CD4-positive, alpha-beta T cell (primary cell): ENCODE measurements at regions of chr7 and their contacts with region 1.

Region 1: GRCh38 chr7:24572997-24573625 is at the start of gene PALS2:
- DNase-seq: peak; percentile 61 to 92 (median 80)
- ATAC-seq: peak; percentile 76
- H3K4me3 ChIP-seq: peak within 1 kb of the TSS; percentile 84
- H3K4me3 Mint-ChIP-seq: peak within 1 kb of the TSS; percentile 97
- H3K27ac ChIP-seq: peak within 1 kb of the TSS; percentile 35 to 49
- H3K27ac Mint-ChIP-seq: peak within 1 kb of the TSS; percentile 91
- H3K4me1 ChIP-seq: peaks cover 19% of the 10 kb centered on the region
- H3K4me1 Mint-ChIP-seq: peaks cover 43% of the 10 kb centered on the region
- H3K27me3 ChIP-seq: no peaks in the 10 kb centered on the region
- H3K27me3 Mint-ChIP-seq: no peaks in the 10 kb centered on the region
- CTCF ChIP-seq: no peak
- total RNA-seq, gene PALS2: 35.0 to 53.2 TPM

Region 2: DNA sequence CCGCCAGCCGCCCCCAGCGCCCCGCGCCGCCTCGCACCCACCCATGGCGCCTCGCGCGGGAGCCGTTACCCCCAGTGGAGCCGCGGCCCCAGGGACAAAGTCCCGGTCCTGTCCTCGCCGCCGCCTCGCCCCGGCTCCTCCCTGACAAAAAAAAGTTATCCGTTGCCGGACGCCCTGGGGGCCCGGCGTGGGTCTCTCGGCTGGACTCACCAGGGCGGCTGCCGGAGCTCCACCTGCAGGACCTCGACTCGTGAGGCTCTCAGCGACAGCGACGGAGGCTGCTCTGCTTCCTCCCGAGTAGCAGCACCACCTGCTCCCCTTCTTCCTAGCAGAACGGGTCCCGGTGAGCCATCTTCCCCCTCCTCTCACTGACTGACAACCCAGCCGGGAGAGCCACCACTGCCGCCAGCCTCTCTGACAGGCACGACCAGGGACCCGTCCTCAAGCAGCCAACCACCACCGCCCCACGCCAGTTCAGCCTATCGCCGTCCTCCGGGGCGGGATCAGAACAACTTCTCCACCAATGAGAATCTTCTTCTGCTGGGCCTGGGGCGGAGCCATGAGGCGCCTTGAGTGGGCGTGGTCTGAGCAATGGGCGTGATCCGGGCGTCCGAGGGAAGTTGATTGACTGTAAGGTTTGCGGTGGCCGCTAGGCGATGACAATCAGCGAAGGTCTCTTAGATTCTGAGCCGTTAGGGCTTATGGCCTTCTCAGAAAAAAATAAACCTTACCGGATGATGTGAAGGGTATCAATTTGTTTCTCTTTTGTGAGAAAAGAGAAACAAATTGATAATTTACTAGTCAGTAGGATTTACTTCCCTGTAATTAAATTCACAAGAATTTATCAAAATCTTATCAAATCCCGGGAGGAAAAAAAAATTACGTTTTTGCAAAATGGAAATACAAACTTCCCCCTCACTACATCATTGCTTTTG is 1559.1 kb before region 1 on chr7 and contains the start of gene HYCC1:
- CTCF ChIA-PET with region 1: no interaction called
- POLR2A ChIA-PET with region 1: no interaction called
- intact Hi-C with region 1: loop called in 1 of 2 experiments (anchors 10 kb)
- DNase-seq: peak; percentile 97 to 99 (median 98)
- ATAC-seq: peak; percentile 96
- H3K4me3 ChIP-seq: peak within 1 kb of the TSS; percentile 87
- H3K4me3 Mint-ChIP-seq: peak within 1 kb of the TSS; percentile 99
- H3K27ac ChIP-seq: peak within 1 kb of the TSS; percentile 31 to 44
- H3K27ac Mint-ChIP-seq: peak within 1 kb of the TSS; percentile 83
- H3K4me1 ChIP-seq: peaks cover 19% of the 10 kb centered on the region
- H3K4me1 Mint-ChIP-seq: peaks cover 24% of the 10 kb centered on the region
- H3K27me3 ChIP-seq: no peaks in the 10 kb centered on the region
- H3K27me3 Mint-ChIP-seq: no peaks in the 10 kb centered on the region
- CTCF ChIP-seq: peak; percentile 65
- total RNA-seq, gene HYCC1: 12.4 to 13.1 TPM

Region 3: DNA sequence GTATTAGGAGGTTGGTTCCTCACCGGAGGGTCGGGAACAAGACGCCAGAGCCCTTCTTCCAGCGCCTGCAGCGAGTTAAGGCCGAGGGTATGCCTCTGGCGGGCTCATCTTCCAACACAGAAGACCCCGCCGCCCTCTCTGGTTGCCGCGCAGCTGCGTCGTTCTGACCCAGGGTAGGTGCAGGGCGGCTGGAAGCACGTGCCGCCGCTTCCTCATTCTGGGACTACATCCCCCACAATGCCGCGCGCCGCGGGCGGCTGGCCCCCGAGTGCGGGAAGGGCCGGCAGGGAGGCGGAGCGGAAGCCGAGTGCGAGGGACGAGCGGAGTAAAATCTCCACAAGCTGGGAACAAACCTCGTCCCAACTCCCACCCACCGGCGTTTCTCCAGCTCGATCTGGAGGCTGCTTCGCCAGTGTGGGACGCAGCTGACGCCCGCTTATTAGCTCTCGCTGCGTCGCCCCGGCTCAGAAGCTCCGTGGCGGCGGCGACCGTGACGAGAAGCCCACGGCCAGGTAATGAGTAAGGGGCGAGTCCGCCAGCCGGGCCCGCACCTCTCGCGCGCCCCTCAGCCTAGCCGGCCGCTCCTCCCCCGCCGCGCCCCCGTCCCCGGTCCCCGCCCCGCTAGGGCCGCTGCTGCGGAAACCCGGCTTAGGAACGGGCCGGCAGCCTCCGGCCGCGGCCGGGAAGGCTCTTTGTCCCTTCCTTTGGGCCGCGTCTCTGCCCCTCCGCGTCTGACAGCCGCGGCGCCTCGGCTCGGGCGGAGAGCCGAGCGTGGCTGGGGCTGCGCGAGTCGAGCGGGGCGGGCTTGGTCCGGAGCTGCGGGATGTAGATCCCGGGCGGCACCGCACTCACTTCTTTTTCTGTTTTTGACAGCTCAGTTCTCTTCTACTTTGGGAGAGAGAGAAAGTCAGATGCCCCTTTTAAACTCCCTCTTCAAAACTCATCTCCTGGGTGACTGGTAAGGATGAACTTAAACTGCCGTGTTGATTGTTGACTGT is 975.7 kb before region 1 on chr7 and contains the start of gene CCDC126:
- CTCF ChIA-PET with region 1: no interaction called
- POLR2A ChIA-PET with region 1: interaction called, 4 read pairs
- intact Hi-C with region 1: loop called in 1 of 2 experiments (anchors 5 kb)
- DNase-seq: peak; percentile 57 to 89 (median 76)
- ATAC-seq: peak; percentile 90
- H3K4me3 ChIP-seq: peak within 1 kb of the TSS; percentile 86
- H3K4me3 Mint-ChIP-seq: peak within 1 kb of the TSS; percentile 95
- H3K27ac ChIP-seq: peak within 1 kb of the TSS in 1 of 2 donors; percentile 75
- H3K27ac Mint-ChIP-seq: peak within 1 kb of the TSS; percentile 80
- H3K4me1 ChIP-seq: peaks cover 17% of the 10 kb centered on the region
- H3K4me1 Mint-ChIP-seq: peaks cover 32% of the 10 kb centered on the region
- H3K27me3 ChIP-seq: no peaks in the 10 kb centered on the region
- H3K27me3 Mint-ChIP-seq: no peaks in the 10 kb centered on the region
- CTCF ChIP-seq: no peak
- total RNA-seq, gene CCDC126: 8.3 to 10.3 TPM

Region 4: DNA sequence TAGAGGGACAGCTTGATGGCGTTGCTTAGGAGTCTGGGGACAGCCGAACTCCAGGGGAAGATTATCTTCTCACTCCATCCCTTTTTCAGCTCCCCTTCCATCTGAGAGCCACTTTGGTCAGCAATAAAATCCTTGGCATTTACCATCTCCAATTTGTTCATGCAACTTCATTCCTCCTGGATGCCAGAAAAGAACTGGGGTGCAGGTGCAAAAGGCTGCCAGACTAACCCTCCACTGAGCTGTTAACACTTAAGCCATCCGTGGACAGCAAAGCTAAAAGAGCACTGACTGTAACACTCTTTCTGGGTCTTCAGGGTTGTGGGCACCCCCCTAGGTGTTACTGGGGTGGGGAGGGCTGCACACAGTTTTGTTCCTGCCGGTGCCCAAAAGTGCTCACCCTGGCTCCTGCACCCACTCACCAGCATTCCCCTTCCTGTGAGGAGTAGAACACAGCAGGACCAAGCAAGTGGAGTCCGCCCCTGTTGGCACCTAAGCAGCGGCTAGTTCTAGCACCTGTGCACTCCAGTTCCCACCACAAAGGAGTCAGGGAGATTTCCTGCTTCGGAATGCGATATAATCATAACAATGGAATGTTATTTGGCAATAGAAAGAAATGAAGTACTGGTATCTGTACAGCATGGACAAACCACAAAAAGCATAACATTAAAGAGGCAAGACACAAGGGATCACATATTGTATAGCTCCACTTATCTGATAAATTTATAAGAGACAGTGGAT is 194.1 kb before region 1 on chr7:
- CTCF ChIA-PET with region 1: no interaction called
- POLR2A ChIA-PET with region 1: no interaction called
- intact Hi-C with region 1: no loop called
- DNase-seq: no peak
- ATAC-seq: no peak
- H3K4me3 ChIP-seq: no peak overlapping the region
- H3K4me3 Mint-ChIP-seq: no peak overlapping the region
- H3K27ac ChIP-seq: no peak overlapping the region
- H3K27ac Mint-ChIP-seq: no peak overlapping the region
- H3K4me1 ChIP-seq: no peaks in the 10 kb centered on the region
- H3K4me1 Mint-ChIP-seq: no peaks in the 10 kb centered on the region
- H3K27me3 ChIP-seq: no peaks in the 10 kb centered on the region
- H3K27me3 Mint-ChIP-seq: no peaks in the 10 kb centered on the region
- CTCF ChIP-seq: no peak

Region 5: DNA sequence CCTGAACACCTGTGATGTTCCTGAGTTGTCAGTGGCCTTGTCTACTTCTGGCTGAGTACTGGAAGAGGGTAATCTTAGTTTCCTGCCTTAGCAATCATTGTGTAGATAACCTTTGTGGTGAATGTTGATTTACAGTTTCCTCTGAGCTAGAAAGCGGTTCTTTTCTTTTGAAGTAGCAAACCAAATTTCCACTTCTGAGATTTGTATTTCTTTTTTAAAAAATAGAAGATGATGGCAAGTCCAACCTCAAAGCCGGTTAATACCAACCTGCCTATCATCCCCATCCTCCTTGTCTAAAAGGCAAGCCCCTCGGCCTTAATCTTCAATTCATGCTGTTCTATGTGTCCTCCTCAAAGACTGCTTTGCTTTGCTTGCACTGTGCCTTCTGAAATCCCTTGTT is 12.3 kb before region 1 on chr7:
- CTCF ChIA-PET with region 1: no interaction called
- POLR2A ChIA-PET with region 1: interaction called, 13 read pairs
- intact Hi-C with region 1: no loop called
- DNase-seq: peak in 4 of 14 experiments; percentile 17 to 50 (median 19)
- ATAC-seq: peak; percentile 89
- H3K4me3 ChIP-seq: no peak overlapping the region
- H3K4me3 Mint-ChIP-seq: peak overlapping the region; percentile 16
- H3K27ac ChIP-seq: no peak overlapping the region
- H3K27ac Mint-ChIP-seq: peak overlapping the region; percentile 16
- H3K4me1 ChIP-seq: peaks cover 10% of the 10 kb centered on the region
- H3K4me1 Mint-ChIP-seq: peaks cover 20% of the 10 kb centered on the region
- H3K27me3 ChIP-seq: no peaks in the 10 kb centered on the region
- H3K27me3 Mint-ChIP-seq: no peaks in the 10 kb centered on the region
- CTCF ChIP-seq: no peak

Region 6: DNA sequence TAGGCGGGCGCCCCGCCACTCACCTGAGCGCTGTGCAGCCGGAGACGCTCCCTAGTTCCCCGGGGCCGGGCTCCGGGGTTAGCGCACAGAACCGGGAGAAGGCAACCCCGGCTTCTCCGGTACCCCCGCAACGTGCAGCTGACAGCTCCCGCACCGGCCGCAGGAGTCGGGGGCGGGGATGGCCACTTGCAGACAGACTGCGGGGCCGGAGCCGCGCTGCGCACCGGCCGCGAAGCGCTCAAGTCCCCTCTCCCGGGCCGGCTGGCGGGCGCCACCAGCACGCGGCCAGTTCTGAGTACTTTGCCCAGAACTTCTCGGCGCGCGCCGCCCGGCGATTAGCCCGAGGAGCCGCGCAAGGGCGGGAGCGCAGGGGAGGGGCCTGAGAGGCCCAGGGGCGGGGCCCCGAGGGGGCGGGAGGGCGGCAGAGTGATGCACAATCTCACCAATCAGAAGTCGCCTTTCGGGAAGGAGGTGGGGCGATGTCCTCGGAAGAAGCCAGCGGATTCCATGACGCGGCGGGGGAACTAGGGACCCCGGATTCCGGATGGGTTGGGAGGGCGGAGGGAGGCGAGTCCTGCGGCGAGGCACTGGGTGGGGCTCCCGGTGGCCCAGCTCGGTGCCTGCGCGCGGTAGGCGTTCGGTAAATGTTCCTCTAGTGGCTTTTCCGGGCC is 406.9 kb after region 1 on chr7 and contains the start of gene OSBPL3:
- CTCF ChIA-PET with region 1: no interaction called
- POLR2A ChIA-PET with region 1: no interaction called
- intact Hi-C with region 1: loop called in 1 of 2 experiments (anchors 5 kb)
- DNase-seq: peak; percentile 90 to 98 (median 94)
- ATAC-seq: peak; percentile 80
- H3K4me3 ChIP-seq: peak within 1 kb of the TSS; percentile 84
- H3K4me3 Mint-ChIP-seq: peak within 1 kb of the TSS; percentile 98
- H3K27ac ChIP-seq: peak within 1 kb of the TSS; percentile 71 to 77
- H3K27ac Mint-ChIP-seq: peak within 1 kb of the TSS; percentile 86
- H3K4me1 ChIP-seq: peaks cover 47% of the 10 kb centered on the region
- H3K4me1 Mint-ChIP-seq: peaks cover 66% of the 10 kb centered on the region
- H3K27me3 ChIP-seq: no peaks in the 10 kb centered on the region
- H3K27me3 Mint-ChIP-seq: no peaks in the 10 kb centered on the region
- CTCF ChIP-seq: peak; percentile 6
- total RNA-seq, gene OSBPL3: 25.4 to 25.9 TPM

Region 7: DNA sequence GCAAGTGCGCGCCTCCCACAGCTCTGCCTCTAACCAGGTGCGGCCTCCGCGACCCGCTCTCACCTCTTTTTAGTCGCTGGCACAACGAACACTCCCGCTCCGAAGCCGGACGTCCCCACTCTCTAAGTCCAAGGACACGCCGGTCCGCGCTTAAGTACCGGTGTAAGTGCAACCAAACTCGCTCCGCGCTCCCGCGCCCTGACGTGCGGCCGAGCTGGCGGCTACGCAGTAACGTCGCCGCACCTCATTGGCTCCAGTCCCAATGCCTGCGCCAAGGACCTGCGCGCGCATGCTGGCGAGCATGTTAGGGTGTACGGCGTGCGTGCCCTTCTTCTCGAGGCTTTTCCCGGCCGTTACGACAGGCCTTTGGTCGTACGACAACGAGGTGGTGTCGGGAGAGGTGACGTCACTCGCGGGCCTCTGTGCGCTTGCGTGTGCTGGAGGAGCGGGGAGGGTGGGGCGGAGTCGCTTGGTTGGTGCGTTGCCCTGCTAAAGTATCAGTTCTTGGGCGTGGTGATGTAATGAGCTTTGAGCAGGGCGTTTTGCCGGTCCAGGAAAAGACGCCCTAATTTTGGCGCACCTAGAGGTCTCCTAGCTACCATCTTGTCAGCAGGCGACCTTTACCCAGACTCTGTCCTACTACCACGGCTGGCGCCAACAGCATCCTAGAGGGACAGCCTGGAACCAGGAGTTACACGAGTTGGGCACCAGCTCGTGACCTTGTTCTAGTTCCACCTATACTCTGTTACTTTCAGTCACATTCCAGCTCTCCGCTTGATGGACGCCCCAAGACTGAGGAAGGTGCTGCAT is 552.2 kb after region 1 on chr7 and contains the start of gene CYCS:
- CTCF ChIA-PET with region 1: no interaction called
- POLR2A ChIA-PET with region 1: interaction called, 5 read pairs
- intact Hi-C with region 1: loop called in 1 of 2 experiments (anchors 5 kb)
- DNase-seq: peak; percentile 99 to 100 (median 99)
- ATAC-seq: peak; percentile 90
- H3K4me3 ChIP-seq: peak within 1 kb of the TSS; percentile 92
- H3K4me3 Mint-ChIP-seq: peak within 1 kb of the TSS; percentile 99
- H3K27ac ChIP-seq: peak within 1 kb of the TSS; percentile 92 to 94
- H3K27ac Mint-ChIP-seq: peak within 1 kb of the TSS; percentile 99
- H3K4me1 ChIP-seq: peaks cover 14% of the 10 kb centered on the region
- H3K4me1 Mint-ChIP-seq: peaks cover 40% of the 10 kb centered on the region
- H3K27me3 ChIP-seq: no peaks in the 10 kb centered on the region
- H3K27me3 Mint-ChIP-seq: no peaks in the 10 kb centered on the region
- CTCF ChIP-seq: no peak
- total RNA-seq, gene CYCS: 126 to 131 TPM